ENCODE measurements at regions of chr17 and their contacts with region 1.

Region 1: DNA sequence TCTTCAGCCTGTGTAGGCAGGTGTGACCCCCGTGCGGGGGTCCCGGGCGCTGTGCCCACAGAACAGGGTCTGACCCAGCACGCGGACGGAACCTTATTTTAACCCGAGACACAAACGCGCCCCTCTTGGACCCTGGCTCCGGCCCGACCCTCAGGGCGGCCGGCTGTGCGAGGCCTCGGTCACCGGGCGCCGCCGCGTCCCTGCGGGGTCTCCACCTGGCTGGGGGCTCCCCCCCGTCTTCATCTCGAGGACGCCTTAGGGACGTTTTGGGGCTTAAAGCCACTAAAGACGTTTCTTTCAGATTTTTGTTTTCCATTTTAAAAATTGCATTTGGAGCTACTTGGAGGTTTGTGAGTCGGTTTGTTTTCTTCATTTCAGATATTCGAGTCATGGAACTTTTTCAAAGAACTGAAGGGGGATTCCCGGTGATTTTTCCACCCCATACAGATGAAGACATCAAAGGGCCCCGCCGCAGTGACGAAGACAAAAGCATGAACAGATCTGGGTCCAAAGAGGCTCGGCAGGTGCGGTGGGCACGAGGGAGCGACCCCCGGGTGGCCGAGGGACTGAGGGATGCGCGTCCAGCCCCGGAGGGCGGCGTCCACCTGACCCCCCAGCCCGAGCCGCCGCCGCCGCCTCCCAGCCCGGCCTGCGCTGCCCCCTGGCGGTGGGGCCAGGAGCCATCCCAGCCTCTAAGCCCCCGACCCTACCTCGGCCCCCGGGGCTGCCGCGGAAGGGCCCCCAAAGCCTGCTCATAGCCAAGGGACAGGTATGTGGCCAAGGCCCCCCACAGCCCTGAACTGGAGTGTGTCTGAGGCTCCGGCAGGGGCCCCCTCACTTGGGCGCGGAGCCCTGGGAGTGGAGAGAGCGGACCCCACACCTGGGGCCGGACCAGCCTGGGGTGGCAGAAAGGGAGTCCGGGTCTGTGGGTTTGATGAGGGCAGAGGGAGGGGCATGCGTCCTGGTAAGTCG is 3.8 kb upstream of the CD7 start:
- DNase-seq: no peak
- H3K4me3 ChIP-seq: no peak overlapping the region
- H3K27ac ChIP-seq: no peak overlapping the region
- H3K4me1 ChIP-seq: peaks cover 6% of the 10 kb centered on the region
- H3K27me3 ChIP-seq: no peaks in the 10 kb centered on the region
- CTCF ChIP-seq: peak; percentile 89 to 98 (median 90)
- POLR2A ChIP-seq: no peak

Region 2: GRCh38 chr17:82041144-82041814 is 280.0 kb before region 1 on chr17:
- intact Hi-C with region 1: loop called (anchors 10 kb)
- DNase-seq: no peak
- H3K4me3 ChIP-seq: no peak overlapping the region
- H3K27ac ChIP-seq: no peak overlapping the region
- H3K4me1 ChIP-seq: peaks cover 7% of the 10 kb centered on the region
- H3K27me3 ChIP-seq: no peaks in the 10 kb centered on the region
- CTCF ChIP-seq: no peak
- POLR2A ChIP-seq: no peak

Region 3: GRCh38 chr17:82205719-82206508 is 115.3 kb before region 1 on chr17:
- intact Hi-C with region 1: loop called (anchors 10 kb)
- DNase-seq: no peak
- H3K4me3 ChIP-seq: no peak overlapping the region
- H3K27ac ChIP-seq: peak overlapping the region; percentile 74
- H3K4me1 ChIP-seq: peaks cover 21% of the 10 kb centered on the region
- H3K27me3 ChIP-seq: no peaks in the 10 kb centered on the region
- CTCF ChIP-seq: peak; percentile 64 to 93 (median 85)
- POLR2A ChIP-seq: no peak

Region 4: DNA sequence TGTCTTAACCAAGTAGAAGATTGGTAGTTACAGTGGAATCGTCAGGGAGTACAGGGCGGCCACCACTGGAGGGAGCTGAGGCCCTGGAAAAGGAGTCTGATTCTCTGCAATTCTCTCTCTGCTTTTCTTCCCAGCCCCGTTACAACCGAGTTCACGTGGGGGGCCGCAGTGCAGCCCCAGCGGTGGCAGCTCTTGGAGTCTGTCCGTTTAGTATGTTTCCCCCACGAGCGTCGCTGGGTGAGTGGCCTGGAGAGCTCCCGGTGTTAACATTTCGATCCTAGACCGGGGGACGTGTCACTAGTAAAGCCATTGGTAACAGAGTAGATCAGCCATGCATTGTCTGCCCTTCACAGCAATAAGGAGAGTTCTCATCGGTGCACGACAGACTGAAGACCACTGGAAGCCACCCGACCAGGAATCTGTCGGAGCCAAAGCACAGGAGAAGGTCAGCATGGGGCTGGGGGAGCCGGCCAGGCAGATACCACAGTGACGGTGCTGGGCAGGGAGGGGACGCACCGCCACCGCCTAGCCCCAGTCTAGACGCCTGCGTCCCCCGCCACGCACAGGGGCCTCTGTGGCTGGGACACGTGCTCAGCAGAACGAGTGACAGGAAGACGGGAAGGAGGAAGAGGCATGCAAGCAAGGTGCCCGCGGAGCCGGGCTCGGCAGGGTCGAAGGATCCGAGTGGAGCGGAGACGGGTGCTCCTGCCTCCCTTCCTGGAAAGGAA is 76.7 kb before region 1 on chr17:
- intact Hi-C with region 1: loop called (anchors 2 kb)
- DNase-seq: no peak
- H3K4me3 ChIP-seq: no peak overlapping the region
- H3K27ac ChIP-seq: peak overlapping the region; percentile 42
- H3K4me1 ChIP-seq: peaks cover 82% of the 10 kb centered on the region
- H3K27me3 ChIP-seq: no peaks in the 10 kb centered on the region
- CTCF ChIP-seq: peak in 1 of 3 experiments; percentile 35
- POLR2A ChIP-seq: no peak

Region 5: DNA sequence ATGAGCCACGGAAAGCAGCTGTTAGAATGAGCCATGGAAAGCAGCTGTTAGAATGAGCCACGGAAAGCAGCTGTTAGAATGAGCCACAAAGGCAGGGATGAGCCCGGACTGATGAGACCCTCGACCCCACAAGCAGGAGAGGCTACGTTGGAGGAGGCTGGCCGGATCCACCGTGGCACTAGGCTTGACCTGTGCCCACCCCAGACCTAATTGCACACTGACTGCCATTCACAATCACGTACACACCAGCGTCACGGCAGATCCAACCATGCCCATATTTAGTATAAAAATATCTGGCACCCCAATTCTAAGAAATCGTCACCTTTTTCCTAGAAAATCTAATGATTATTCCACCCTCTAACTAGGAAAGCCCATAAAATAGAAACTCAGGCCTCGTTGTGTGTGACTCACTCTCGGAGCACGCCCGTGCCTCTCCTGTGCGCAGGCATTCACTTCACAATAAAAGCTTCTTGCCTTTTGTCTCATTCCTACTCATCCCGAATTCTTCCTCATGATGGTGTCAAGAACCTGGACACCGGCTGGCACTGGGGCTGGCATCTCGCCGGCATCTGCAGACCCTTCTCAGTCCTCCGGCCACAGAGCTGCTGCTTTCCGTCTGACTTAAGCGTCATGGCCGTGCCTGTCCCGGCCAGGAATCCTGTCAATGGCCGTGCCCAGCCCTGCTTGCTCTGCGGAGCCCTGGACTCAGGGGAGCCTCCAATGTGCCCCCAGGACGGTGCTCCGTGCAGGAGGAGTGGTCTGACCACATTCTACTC is 17.8 kb after region 1 on chr17:
- intact Hi-C with region 1: no loop called
- DNase-seq: no peak
- H3K4me3 ChIP-seq: peak overlapping the region; percentile 36 to 52
- H3K27ac ChIP-seq: peak overlapping the region; percentile 81
- H3K4me1 ChIP-seq: peaks cover 30% of the 10 kb centered on the region
- H3K27me3 ChIP-seq: no peaks in the 10 kb centered on the region
- CTCF ChIP-seq: no peak
- POLR2A ChIP-seq: no peak

Region 6: GRCh38 chr17:82384730-82385481 is 63.7 kb after region 1 on chr17:
- intact Hi-C with region 1: no loop called
- DNase-seq: no peak
- H3K4me3 ChIP-seq: no peak overlapping the region
- H3K27ac ChIP-seq: peak overlapping the region; percentile 72
- H3K4me1 ChIP-seq: peaks cover 28% of the 10 kb centered on the region
- H3K27me3 ChIP-seq: no peaks in the 10 kb centered on the region
- CTCF ChIP-seq: no peak
- POLR2A ChIP-seq: no peak

Region 7: GRCh38 chr17:82418001-82418986 is 97.1 kb after region 1 on chr17 and contains the starts of genes HEXD and OGFOD3:
- intact Hi-C with region 1: no loop called
- DNase-seq: no peak
- H3K4me3 ChIP-seq: peak within 1 kb of the TSS; percentile 79 to 83
- H3K27ac ChIP-seq: peak within 1 kb of the TSS; percentile 84
- H3K4me1 ChIP-seq: peaks cover 25% of the 10 kb centered on the region
- H3K27me3 ChIP-seq: no peaks in the 10 kb centered on the region
- CTCF ChIP-seq: no peak
- POLR2A ChIP-seq: peak in 1 of 2 donors; percentile 38
- total RNA-seq, gene HEXD: 90.4 TPM
- total RNA-seq, gene OGFOD3: 25.5 TPM

Region 8: DNA sequence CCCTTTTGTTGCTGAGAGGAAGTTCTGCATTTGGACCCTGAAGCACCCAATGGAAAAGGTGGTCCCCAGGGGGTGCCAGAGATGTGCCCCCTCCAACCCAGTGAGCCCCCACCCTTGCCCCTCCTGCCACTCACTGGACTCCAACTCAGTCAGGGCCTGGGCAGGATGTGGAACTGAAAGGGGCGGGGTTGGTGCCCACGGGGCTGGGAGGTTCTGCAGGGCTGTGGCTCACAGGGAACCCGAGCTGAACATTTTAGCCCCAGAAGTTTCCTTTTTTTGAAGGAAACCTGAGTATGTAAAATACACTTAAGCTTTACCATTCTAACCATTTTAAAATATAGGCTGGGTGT is 112.9 kb after region 1 on chr17:
- intact Hi-C with region 1: no loop called
- DNase-seq: no peak
- H3K4me3 ChIP-seq: no peak overlapping the region
- H3K27ac ChIP-seq: no peak overlapping the region
- H3K4me1 ChIP-seq: no peaks in the 10 kb centered on the region
- H3K27me3 ChIP-seq: no peaks in the 10 kb centered on the region
- CTCF ChIP-seq: no peak
- POLR2A ChIP-seq: no peak

Measured in vagina (tissue), 2 donors.